ENCODE measurements at regions of chr1 and their contacts with region 1.

Region 1: DNA sequence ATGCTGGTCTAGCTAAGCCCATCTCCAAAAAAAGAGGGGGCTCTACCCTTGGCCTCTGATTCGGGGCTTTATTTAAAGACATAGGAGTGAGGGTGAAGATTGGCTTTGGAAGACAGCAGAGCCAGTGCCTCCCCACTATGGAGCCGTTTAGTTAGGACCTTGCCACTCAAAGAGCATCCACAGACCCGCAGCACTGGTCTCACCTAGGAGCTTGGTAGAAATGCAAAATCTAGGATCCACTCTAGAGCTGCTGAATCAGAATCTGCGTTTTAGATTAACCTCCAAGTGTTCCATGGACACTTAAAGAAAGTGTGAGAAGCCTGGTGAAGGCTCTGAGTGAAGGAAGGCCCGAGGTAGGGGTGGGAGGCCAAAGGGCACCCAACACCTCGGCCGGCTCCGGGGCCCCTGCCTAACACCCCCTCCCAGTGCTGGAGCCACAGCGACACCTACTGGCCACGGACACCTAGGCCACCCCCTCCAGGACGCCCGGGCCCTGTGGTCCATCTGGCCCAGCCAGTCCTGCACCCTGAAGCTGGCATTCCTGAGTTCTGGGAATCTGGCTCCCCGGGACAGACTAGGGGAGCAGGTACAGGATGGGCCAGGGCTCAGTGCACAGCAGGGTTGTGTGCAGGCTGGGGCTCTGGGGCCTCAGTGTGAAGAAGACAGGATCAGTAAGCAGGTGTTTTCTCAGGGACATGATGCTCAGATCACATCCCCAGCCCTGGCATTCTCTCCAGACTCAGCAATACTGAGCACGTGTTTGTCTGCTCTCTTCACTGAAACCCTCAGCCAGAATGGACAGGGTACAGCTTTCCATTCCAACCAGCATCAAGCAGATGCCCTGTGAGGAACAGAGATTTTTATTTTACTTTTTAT is 79.2 kb downstream of the TMEM53 start:
- DNase-seq: peak; percentile 65 to 88 (median 79)
- H3K4me3 ChIP-seq: no peak overlapping the region
- H3K27ac ChIP-seq: peak overlapping the region; percentile 61 to 100 (median 97)
- H3K27me3 ChIP-seq: peaks cover 0 to 2% (median 0%) of the 10 kb centered on the region in 45 donors
- CTCF ChIP-seq: peak; percentile 81 to 99 (median 96)

Region 2: GRCh38 chr1:44377925-44378784 is 217.0 kb before region 1 on chr1:
- intact Hi-C with region 1: loop called (anchors 10 kb)
- DNase-seq: peak in 7 of 10 donors; percentile 31 to 63 (median 50)
- H3K4me3 ChIP-seq: no peak overlapping the region
- H3K27ac ChIP-seq: peak overlapping the region in 38 of 59 donors; percentile 3 to 74 (median 46)
- H3K27me3 ChIP-seq: no peaks in the 10 kb centered on the region
- CTCF ChIP-seq: peak; percentile 62 to 92 (median 78)

Region 3: GRCh38 chr1:44500181-44501046 is 94.7 kb before region 1 on chr1:
- intact Hi-C with region 1: loop called (anchors 1 to 2 kb)
- DNase-seq: peak in 9 of 10 donors; percentile 42 to 74 (median 61)
- H3K4me3 ChIP-seq: peak overlapping the region in 35 of 59 donors; percentile 0 to 46 (median 25)
- H3K27ac ChIP-seq: peak overlapping the region; percentile 40 to 100 (median 93)
- H3K27me3 ChIP-seq: peaks cover 0 to 10% (median 0%) of the 10 kb centered on the region in 45 donors
- CTCF ChIP-seq: peak in 55 of 56 donors; percentile 31 to 76 (median 58)

Region 4: GRCh38 chr1:44531785-44532566 is 63.1 kb before region 1 on chr1:
- intact Hi-C with region 1: loop called in 1 of 2 experiments (anchors 5 kb)
- DNase-seq: no peak
- H3K4me3 ChIP-seq: no peak overlapping the region
- H3K27ac ChIP-seq: peak overlapping the region; percentile 13 to 100 (median 96)
- H3K27me3 ChIP-seq: peaks cover 0 to 3% (median 0%) of the 10 kb centered on the region in 45 donors
- CTCF ChIP-seq: peak in 1 of 56 donors; percentile 7